ENCODE measurements at regions of chr20 and their contacts with region 1.

Region 1: GRCh38 chr20:34704177-34705007 is at the start of gene TP53INP2:
- DNase-seq: peak; percentile 97
- total RNA-seq, gene TP53INP2: 117 TPM

Region 2: GRCh38 chr20:34312544-34313217 is 391.7 kb before region 1 on chr20:
- intact Hi-C with region 1: loop called (anchors 10 kb)
- DNase-seq: peak; percentile 95

Region 3: DNA sequence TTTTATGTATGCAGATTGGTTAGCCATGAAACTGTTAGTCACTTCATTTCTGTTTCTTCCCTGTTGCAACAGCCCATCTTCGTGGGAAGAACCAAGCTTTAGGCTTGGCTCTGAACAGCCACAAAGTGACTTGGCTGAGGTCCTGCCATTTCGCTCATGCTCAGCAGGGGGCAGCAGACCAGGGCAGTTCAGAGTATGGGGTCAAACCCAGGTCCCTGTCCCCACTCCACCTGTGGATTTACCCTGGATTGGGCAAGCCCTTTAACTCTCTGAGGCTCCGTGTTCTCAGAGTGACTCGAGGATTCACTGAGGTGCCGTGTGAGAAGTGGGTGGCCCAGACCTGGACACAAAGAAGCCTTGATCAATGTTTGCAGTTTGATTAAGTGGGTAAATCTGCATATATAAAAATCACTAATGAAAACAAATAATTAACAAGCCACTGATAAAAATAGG is 165.7 kb before region 1 on chr20:
- intact Hi-C with region 1: loop called (anchors 5 kb)
- DNase-seq: no peak

Region 4: GRCh38 chr20:34579191-34579978 is 125.0 kb before region 1 on chr20:
- intact Hi-C with region 1: loop called (anchors 2 kb)
- DNase-seq: no peak

Region 5: GRCh38 chr20:34676642-34677373 is 27.6 kb before region 1 on chr20 and contains the start of gene PIGU:
- intact Hi-C with region 1: loop called (anchors 2 kb)
- DNase-seq: peak; percentile 98
- total RNA-seq, gene PIGU: 11.0 TPM

Measured in cardiac septum (tissue), 1 donor.